ENCODE measurements at regions of chr14 and their contacts with region 1.

Region 1: GRCh38 chr14:61561657-61562276 is 133.5 kb upstream of the HIF1A start:
- DNase-seq: peak; percentile 99
- ATAC-seq: peak; percentile 39
- H3K4me3 ChIP-seq: peak overlapping the region; percentile 19; the same call in 1 of the 2 replicates
- H3K27ac ChIP-seq: peak overlapping the region; percentile 96
- H3K4me1 ChIP-seq: peaks cover 90% of the 10 kb centered on the region
- H3K27me3 ChIP-seq: no peaks in the 10 kb centered on the region
- CTCF ChIP-seq: peak; percentile 25; the same call in 1 of the 2 replicates

Region 2: GRCh38 chr14:61525293-61526011 is 36.3 kb before region 1 on chr14:
- CTCF ChIA-PET with region 1: interaction called, 3 read pairs
- POLR2A ChIA-PET with region 1: interaction called, 12 read pairs
- intact Hi-C with region 1: loop called (anchors 2 kb)
- DNase-seq: peak; percentile 100
- ATAC-seq: peak; percentile 73
- H3K4me3 ChIP-seq: peak overlapping the region; percentile 27; the same call in 1 of the 2 replicates
- H3K27ac ChIP-seq: peak overlapping the region; percentile 95
- H3K4me1 ChIP-seq: peaks cover 66% of the 10 kb centered on the region
- H3K27me3 ChIP-seq: no peaks in the 10 kb centered on the region
- CTCF ChIP-seq: no peak

Region 3: DNA sequence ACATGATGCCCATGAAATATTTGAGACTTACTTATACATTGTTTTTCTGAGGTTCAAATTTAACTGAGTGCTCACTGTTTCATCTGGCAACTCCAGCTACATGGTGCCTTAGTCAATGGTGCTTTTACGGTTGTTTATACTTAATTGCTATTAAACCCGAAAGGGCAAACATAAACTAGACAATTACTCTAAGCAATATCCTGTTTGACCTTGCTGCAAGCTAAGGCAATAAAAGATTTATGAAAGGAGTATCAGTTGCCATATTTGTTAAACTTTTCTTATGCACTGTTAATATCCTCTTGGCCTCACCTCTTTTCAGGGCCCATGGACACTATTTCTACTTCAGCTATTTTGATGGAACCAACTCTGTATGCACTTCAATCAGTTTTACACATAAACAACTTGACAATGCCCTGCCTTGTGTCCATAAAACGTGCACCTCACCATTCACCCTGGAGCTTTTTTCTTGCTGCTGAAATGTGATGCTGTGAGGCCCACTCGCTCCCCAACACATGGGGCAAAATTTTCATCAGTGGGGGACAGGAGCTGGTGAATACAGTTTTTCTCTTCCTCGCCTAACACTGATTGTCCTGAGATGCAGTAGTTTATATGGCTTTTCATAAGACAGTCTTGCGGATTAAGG is 69.4 kb after region 1 on chr14:
- CTCF ChIA-PET with region 1: interaction called, 8 read pairs
- POLR2A ChIA-PET with region 1: no interaction called
- intact Hi-C with region 1: loop called (anchors 1 kb)
- DNase-seq: peak; percentile 34
- ATAC-seq: peak; percentile 81
- H3K4me3 ChIP-seq: no peak overlapping the region
- H3K27ac ChIP-seq: peak overlapping the region; percentile 15
- H3K4me1 ChIP-seq: peaks cover 17% of the 10 kb centered on the region
- H3K27me3 ChIP-seq: no peaks in the 10 kb centered on the region
- CTCF ChIP-seq: no peak

Region 4: GRCh38 chr14:61662437-61663311 is 100.9 kb after region 1 on chr14:
- CTCF ChIA-PET with region 1: interaction called, 7 read pairs
- POLR2A ChIA-PET with region 1: interaction called, 7 read pairs
- intact Hi-C with region 1: loop called (anchors 1 kb)
- DNase-seq: peak; percentile 99
- ATAC-seq: peak; percentile 81
- H3K4me3 ChIP-seq: peak overlapping the region; percentile 34; the same call in 1 of the 2 replicates
- H3K27ac ChIP-seq: peak overlapping the region; percentile 89
- H3K4me1 ChIP-seq: peaks cover 60% of the 10 kb centered on the region
- H3K27me3 ChIP-seq: no peaks in the 10 kb centered on the region
- CTCF ChIP-seq: no peak

Region 5: DNA sequence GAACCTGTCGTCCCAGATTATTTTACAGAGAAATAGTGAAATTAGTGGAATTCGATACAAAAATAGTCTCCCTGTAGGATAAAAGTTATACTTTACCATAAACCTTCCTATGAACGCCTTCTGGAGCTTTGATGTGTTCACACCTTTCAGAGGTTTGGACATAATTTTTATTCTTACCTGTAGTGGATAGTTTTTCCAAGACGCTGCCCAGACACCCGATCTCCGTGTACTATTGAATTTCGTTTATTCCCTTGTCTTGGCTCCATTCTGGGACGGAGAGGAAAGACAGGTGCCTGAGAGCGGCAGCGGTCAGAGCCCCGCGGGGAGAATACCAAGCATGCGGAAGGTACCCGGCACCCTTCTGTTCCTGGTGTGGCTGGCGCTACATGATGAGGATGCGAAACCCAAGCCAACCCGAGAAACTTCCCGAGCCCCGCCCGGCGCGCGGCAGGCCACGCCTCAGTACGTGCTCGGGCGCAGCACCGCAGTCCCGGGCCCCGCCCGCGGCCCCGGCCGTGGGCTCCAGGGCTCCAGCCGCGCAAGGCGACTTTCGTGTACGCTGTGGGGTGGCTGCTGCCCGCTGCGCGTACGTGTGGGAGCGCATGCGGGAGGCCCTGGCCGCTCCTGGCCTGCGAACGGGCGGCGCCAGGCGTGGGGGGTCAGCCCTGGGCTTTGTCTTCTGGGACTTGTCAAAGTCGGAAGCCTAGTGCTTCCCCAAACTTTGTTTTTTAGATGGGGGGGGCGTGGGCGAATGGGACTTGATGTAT is 189.1 kb after region 1 on chr14:
- CTCF ChIA-PET with region 1: no interaction called
- POLR2A ChIA-PET with region 1: interaction called, 11 read pairs
- intact Hi-C with region 1: loop called (anchors 2 kb)
- DNase-seq: peak; percentile 99
- ATAC-seq: peak; percentile 79
- H3K4me3 ChIP-seq: peak overlapping the region; percentile 72
- H3K27ac ChIP-seq: peak overlapping the region; percentile 55
- H3K4me1 ChIP-seq: peaks cover 79% of the 10 kb centered on the region
- H3K27me3 ChIP-seq: no peaks in the 10 kb centered on the region
- CTCF ChIP-seq: no peak